CD4-positive, alpha-beta memory T cell (primary cell): ENCODE measurements at regions of chr13 and their contacts with region 1.

Region 1: DNA sequence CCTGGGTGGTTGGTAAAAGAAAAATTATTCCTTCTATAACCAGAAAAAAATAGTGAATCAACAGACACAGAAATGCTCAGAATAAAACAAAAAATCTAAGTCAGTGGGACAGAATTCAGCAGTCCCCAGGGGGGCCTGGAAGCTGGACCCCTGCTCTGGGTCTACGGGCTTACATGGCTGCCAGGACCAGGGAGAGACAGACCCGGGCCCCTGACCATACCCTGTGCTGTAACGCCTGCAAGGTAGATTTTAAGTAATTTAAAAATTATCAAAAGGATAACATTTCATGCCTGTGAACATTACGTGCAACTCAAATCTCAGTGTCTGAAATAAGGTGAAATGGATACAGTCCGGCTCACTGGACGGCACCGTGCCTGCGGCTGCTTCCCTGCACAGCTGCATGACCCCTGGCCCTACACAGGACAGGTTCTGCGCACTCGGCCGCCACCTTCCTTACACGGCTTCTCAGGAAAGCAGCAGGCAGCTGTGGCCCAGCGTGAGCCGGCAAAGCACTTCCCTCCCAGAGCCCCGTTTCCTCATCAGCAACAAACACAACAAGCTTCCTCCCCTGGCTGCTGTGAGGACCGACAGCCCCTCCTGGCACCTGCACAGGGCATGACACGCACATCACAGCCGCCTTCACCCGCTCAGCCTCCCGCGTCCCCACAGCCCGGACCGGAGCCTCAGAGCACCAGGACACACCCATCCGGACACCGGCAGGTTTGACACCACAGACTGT is 22.2 kb downstream of the RASA3 start:
- DNase-seq: peak; percentile 82 to 91 (median 88)
- H3K4me3 ChIP-seq: peak overlapping the region; percentile 42 to 44
- H3K4me3 Mint-ChIP-seq: peak overlapping the region; percentile 84 to 91 (median 88)
- H3K27ac ChIP-seq: peak overlapping the region; percentile 52
- H3K27ac Mint-ChIP-seq: peak overlapping the region; percentile 94 to 98 (median 95)
- H3K4me1 ChIP-seq: peaks cover 96% of the 10 kb centered on the region
- H3K4me1 Mint-ChIP-seq: peaks cover 47 to 90% (median 74%) of the 10 kb centered on the region in 4 donors
- H3K27me3 ChIP-seq: no peaks in the 10 kb centered on the region
- H3K27me3 Mint-ChIP-seq: no peaks in the 10 kb centered on the region

Region 2: DNA sequence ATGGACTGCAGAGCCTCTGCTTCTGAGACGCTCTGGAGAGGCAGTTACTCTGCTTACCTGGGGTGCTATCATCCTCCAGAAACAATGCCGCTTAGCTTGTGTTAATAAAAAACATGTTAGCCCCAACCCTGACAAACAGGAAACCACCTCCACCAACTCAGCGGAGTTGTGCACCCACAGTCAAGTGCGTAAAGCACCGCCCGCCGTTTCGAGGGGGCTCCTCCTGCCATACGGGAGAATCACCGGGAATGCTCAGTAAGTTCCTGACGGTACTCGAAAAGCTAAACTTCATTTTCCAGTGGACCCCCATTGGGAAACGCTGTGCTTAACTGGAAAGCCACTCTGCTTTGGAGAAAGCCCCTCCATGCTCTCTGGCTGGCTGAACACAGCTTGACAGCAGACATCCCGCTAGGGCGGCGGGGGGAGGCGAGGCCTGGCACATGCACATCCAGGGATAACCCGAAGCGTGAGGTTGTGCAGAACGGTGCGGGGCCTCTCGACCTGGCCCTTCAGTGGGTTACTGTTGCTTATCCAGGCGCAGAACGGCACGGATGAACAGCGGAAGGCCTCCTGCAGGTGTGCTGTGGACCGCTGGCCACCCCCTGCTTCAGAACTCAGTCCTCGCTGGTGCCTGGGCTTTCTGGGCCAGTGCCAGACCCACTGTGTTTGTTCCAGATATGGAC is 263.5 kb before region 1 on chr13:
- CTCF ChIA-PET with region 1: no interaction called
- POLR2A ChIA-PET with region 1: interaction called, 14 read pairs
- intact Hi-C with region 1: no loop called
- DNase-seq: peak in 4 of 5 donors; percentile 42 to 57 (median 48)
- H3K4me3 ChIP-seq: peak overlapping the region; percentile 5 to 11
- H3K4me3 Mint-ChIP-seq: peak overlapping the region; percentile 67 to 87 (median 79)
- H3K27ac ChIP-seq: no peak overlapping the region
- H3K27ac Mint-ChIP-seq: peak overlapping the region in 6 of 7 donors; percentile 36 to 87 (median 60)
- H3K4me1 ChIP-seq: peaks cover 42% of the 10 kb centered on the region
- H3K4me1 Mint-ChIP-seq: peaks cover 22 to 62% (median 35%) of the 10 kb centered on the region in 4 donors
- H3K27me3 ChIP-seq: no peaks in the 10 kb centered on the region
- H3K27me3 Mint-ChIP-seq: no peaks in the 10 kb centered on the region

Region 3: GRCh38 chr13:114011226-114011625 is 99.0 kb before region 1 on chr13:
- CTCF ChIA-PET with region 1: no interaction called
- POLR2A ChIA-PET with region 1: no interaction called
- intact Hi-C with region 1: no loop called
- DNase-seq: no peak
- H3K4me3 ChIP-seq: no peak overlapping the region
- H3K4me3 Mint-ChIP-seq: peak overlapping the region in 2 of 8 donors; percentile 0 to 20
- H3K27ac ChIP-seq: no peak overlapping the region
- H3K27ac Mint-ChIP-seq: peak overlapping the region in 5 of 7 donors; percentile 54 to 83 (median 75)
- H3K4me1 ChIP-seq: no peaks in the 10 kb centered on the region
- H3K4me1 Mint-ChIP-seq: peaks cover 2 to 6% (median 4%) of the 10 kb centered on the region in 4 donors
- H3K27me3 ChIP-seq: no peaks in the 10 kb centered on the region
- H3K27me3 Mint-ChIP-seq: no peaks in the 10 kb centered on the region

Region 4: DNA sequence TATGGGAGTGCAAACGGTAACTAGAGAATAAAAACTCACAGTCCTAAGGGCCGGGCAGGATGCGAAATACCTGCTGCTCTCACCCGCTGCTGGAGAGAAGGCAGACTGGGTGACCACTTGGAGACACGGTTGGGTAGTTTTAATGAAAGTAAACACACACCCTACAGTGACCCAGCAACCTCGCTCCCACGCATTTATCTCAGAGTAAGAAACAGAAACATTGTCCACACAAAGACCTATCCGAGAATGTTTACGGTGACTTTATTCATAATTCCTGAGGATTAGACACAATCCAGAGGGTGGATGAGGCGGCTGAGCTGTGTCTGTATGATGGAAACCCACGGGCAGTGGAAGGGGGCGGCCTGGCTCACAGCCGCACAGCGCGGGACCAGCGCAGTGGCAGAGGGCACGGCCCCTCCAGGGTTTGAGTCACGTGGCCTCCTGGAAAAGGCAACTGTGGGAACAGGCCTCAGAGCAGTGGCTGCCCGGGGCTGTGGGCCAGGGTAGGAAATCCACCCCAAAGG is 62.8 kb before region 1 on chr13:
- CTCF ChIA-PET with region 1: interaction called, 5 read pairs
- POLR2A ChIA-PET with region 1: no interaction called
- intact Hi-C with region 1: loop called (anchors 5 kb)
- DNase-seq: no peak
- H3K4me3 ChIP-seq: no peak overlapping the region
- H3K4me3 Mint-ChIP-seq: peak overlapping the region in 4 of 8 donors; percentile 17 to 45 (median 18)
- H3K27ac ChIP-seq: no peak overlapping the region
- H3K27ac Mint-ChIP-seq: peak overlapping the region in 6 of 7 donors; percentile 0 to 91 (median 62)
- H3K4me1 ChIP-seq: peaks cover 53% of the 10 kb centered on the region
- H3K4me1 Mint-ChIP-seq: peaks cover 30 to 78% (median 56%) of the 10 kb centered on the region in 4 donors
- H3K27me3 ChIP-seq: no peaks in the 10 kb centered on the region
- H3K27me3 Mint-ChIP-seq: no peaks in the 10 kb centered on the region

Region 5: GRCh38 chr13:114132419-114133121 is 22.3 kb after region 1 on chr13 and contains the start of gene RASA3:
- CTCF ChIA-PET with region 1: interaction called, 32 read pairs
- POLR2A ChIA-PET with region 1: interaction called, 113 read pairs
- intact Hi-C with region 1: loop called (anchors 1 kb)
- DNase-seq: peak; percentile 59 to 72 (median 62)
- H3K4me3 ChIP-seq: peak within 1 kb of the TSS; percentile 92 to 93
- H3K4me3 Mint-ChIP-seq: peak within 1 kb of the TSS; percentile 79 to 100 (median 100)
- H3K27ac ChIP-seq: peak within 1 kb of the TSS; percentile 74
- H3K27ac Mint-ChIP-seq: peak within 1 kb of the TSS; percentile 87 to 100 (median 98)
- H3K4me1 ChIP-seq: peaks cover 45% of the 10 kb centered on the region
- H3K4me1 Mint-ChIP-seq: peaks cover 31 to 69% (median 57%) of the 10 kb centered on the region in 4 donors
- H3K27me3 ChIP-seq: no peaks in the 10 kb centered on the region
- H3K27me3 Mint-ChIP-seq: no peaks in the 10 kb centered on the region
- total RNA-seq, gene RASA3: 171 to 174 TPM

Region 6: GRCh38 chr13:114161644-114162532 is 51.6 kb after region 1 on chr13:
- CTCF ChIA-PET with region 1: interaction called, 11 read pairs
- POLR2A ChIA-PET with region 1: interaction called, 3 read pairs
- intact Hi-C with region 1: no loop called
- DNase-seq: peak in 3 of 5 donors; percentile 32 to 51 (median 39)
- H3K4me3 ChIP-seq: peak overlapping the region in 1 of 2 donors; percentile 13
- H3K4me3 Mint-ChIP-seq: peak overlapping the region; percentile 50 to 92 (median 86)
- H3K27ac ChIP-seq: peak overlapping the region; percentile 23
- H3K27ac Mint-ChIP-seq: peak overlapping the region; percentile 81 to 97 (median 93)
- H3K4me1 ChIP-seq: peaks cover 81% of the 10 kb centered on the region
- H3K4me1 Mint-ChIP-seq: peaks cover 52 to 95% (median 72%) of the 10 kb centered on the region in 4 donors
- H3K27me3 ChIP-seq: no peaks in the 10 kb centered on the region
- H3K27me3 Mint-ChIP-seq: no peaks in the 10 kb centered on the region

Region 7: GRCh38 chr13:114325729-114326128 is 215.5 kb after region 1 on chr13:
- CTCF ChIA-PET with region 1: no interaction called
- POLR2A ChIA-PET with region 1: no interaction called
- intact Hi-C with region 1: no loop called
- DNase-seq: no peak
- H3K4me3 ChIP-seq: no peak overlapping the region
- H3K4me3 Mint-ChIP-seq: no peak overlapping the region
- H3K27ac ChIP-seq: no peak overlapping the region
- H3K27ac Mint-ChIP-seq: peak overlapping the region in 2 of 7 donors; percentile 8 to 38
- H3K4me1 ChIP-seq: no peaks in the 10 kb centered on the region
- H3K4me1 Mint-ChIP-seq: peaks cover 4 to 23% (median 14%) of the 10 kb centered on the region in 4 donors
- H3K27me3 ChIP-seq: no peaks in the 10 kb centered on the region
- H3K27me3 Mint-ChIP-seq: no peaks in the 10 kb centered on the region